MCF 10A (cell line): ENCODE measurements at regions of chr3 and their contacts with region 1.

Region 1: DNA sequence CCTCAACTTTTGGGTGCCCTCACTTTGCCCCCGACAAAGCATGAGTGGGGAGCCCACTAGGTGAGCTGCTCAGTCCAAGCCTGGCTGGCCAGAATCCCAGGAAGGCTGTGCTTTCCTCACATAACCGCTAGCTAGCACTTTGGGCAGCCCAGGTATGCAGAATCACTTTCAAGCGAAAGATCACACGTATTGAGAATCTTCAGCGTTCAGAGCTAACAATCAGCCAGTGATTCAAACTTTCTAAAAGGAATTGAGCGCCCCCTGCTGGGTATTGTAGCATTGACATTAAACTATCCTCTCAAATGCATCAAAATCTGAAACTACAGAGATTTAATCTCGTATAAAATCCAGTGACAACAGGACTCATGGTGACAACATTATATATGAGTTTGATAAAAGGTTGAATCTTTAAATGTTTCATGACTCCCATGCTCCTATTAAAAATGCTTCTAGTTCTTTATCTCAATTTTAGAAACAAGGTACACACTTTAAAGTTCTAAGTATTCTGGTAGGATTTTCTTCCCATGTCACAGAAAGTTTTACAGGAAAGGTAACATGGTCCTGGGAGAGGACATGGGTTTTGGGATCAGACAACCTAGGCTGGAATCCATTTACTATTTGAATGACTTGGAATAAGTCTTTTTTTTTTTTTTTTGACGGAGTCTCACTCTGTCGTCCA is 11.8 kb downstream of the ANAPC13 start:
- DNase-seq: peak; percentile 90
- H3K4me3 Mint-ChIP-seq: no peak overlapping the region
- H3K27ac Mint-ChIP-seq: no peak overlapping the region
- H3K4me1 Mint-ChIP-seq: peaks cover 31% of the 10 kb centered on the region
- H3K27me3 Mint-ChIP-seq: no peaks in the 10 kb centered on the region
- CTCF ChIP-seq: peak; percentile 60

Region 2: GRCh38 chr3:133927540-133928066 is 546.4 kb before region 1 on chr3:
- CTCF ChIA-PET with region 1: no interaction called
- POLR2A ChIA-PET with region 1: no interaction called
- intact Hi-C with region 1: loop called (anchors 2 kb)
- DNase-seq: no peak
- H3K4me3 Mint-ChIP-seq: no peak overlapping the region
- H3K27ac Mint-ChIP-seq: no peak overlapping the region
- H3K4me1 Mint-ChIP-seq: peaks cover 13% of the 10 kb centered on the region
- H3K27me3 Mint-ChIP-seq: peaks cover 21% of the 10 kb centered on the region
- CTCF ChIP-seq: peak; percentile 71

Region 3: GRCh38 chr3:134308350-134308891 is 165.6 kb before region 1 on chr3:
- CTCF ChIA-PET with region 1: interaction called, 444 read pairs
- POLR2A ChIA-PET with region 1: interaction called, 42 read pairs
- intact Hi-C with region 1: loop called (anchors 1 kb)
- DNase-seq: peak; percentile 83
- H3K4me3 Mint-ChIP-seq: no peak overlapping the region
- H3K27ac Mint-ChIP-seq: peak overlapping the region; percentile 57
- H3K4me1 Mint-ChIP-seq: peaks cover 32% of the 10 kb centered on the region
- H3K27me3 Mint-ChIP-seq: no peaks in the 10 kb centered on the region
- CTCF ChIP-seq: peak; percentile 97

Region 4: GRCh38 chr3:134357261-134358184 is 116.5 kb before region 1 on chr3:
- CTCF ChIA-PET with region 1: interaction called, 449 read pairs
- POLR2A ChIA-PET with region 1: interaction called, 55 read pairs
- intact Hi-C with region 1: no loop called
- DNase-seq: peak; percentile 90
- H3K4me3 Mint-ChIP-seq: peak overlapping the region; percentile 12
- H3K27ac Mint-ChIP-seq: peak overlapping the region; percentile 27
- H3K4me1 Mint-ChIP-seq: peaks cover 41% of the 10 kb centered on the region
- H3K27me3 Mint-ChIP-seq: no peaks in the 10 kb centered on the region
- CTCF ChIP-seq: no peak

Region 5: GRCh38 chr3:134427400-134428145 is 46.4 kb before region 1 on chr3:
- CTCF ChIA-PET with region 1: interaction called, 12 read pairs
- POLR2A ChIA-PET with region 1: interaction called, 7 read pairs
- intact Hi-C with region 1: no loop called
- DNase-seq: peak; percentile 96
- H3K4me3 Mint-ChIP-seq: no peak overlapping the region
- H3K27ac Mint-ChIP-seq: peak overlapping the region; percentile 84
- H3K4me1 Mint-ChIP-seq: peaks cover 11% of the 10 kb centered on the region
- H3K27me3 Mint-ChIP-seq: no peaks in the 10 kb centered on the region
- CTCF ChIP-seq: no peak

Region 6: DNA sequence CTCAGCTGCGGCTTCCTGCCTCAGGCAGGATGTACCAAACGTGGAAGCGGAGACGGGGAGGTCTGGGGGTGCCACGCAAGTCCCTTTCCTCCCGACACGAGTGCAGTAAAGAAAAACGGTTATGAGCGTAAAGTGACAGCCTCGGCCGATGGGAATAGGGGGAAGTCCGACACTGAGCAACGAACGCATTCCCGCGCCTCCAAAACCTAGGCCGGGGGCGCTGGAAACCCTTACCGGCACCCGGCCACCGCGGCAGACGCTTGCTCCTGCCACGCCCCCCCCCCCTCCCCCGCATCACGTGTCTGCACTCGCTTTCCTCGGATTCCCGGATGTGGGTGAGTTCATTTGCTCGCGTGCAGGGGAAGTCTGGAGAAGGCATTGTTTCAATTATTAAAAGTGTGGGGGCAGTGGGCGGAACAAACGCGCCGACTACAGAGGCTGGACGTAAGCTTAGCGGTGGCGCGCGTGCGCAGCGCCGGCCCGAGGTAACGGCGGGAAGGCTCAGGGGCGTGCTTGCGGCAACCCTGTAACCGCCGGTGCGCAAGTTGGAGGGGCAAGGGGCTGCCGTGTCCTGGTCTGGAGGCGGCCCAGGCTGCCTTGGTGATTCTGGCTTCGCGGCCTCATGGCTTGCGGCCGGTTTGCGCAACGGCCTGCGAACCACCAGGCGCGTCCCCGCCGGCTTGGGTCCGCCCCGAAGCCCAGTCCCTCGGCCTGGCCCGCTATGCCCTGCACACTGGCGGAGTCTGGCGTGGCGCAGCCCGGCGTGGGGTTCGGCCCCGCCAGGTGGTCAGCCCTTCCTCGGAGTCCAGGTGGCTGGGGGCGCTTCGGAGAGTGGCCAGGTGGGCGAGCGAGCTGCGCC is 11.9 kb after region 1 on chr3 and contains the starts of genes ANAPC13 and CEP63:
- CTCF ChIA-PET with region 1: interaction called, 31 read pairs
- POLR2A ChIA-PET with region 1: interaction called, 77 read pairs
- intact Hi-C with region 1: no loop called
- DNase-seq: peak; percentile 98
- H3K4me3 Mint-ChIP-seq: peak within 1 kb of the TSS; percentile 75
- H3K27ac Mint-ChIP-seq: peak within 1 kb of the TSS; percentile 87
- H3K4me1 Mint-ChIP-seq: peaks cover 31% of the 10 kb centered on the region
- H3K27me3 Mint-ChIP-seq: no peaks in the 10 kb centered on the region
- CTCF ChIP-seq: no peak
- total RNA-seq, gene ANAPC13: 61.5 and 78.4 TPM in 2 replicates
- total RNA-seq, gene CEP63: 37.0 and 40.0 TPM in 2 replicates